Gastrocnemius medialis (tissue), 4 donors: ENCODE measurements at regions of chr21 and their contacts with region 1.

Region 1: DNA sequence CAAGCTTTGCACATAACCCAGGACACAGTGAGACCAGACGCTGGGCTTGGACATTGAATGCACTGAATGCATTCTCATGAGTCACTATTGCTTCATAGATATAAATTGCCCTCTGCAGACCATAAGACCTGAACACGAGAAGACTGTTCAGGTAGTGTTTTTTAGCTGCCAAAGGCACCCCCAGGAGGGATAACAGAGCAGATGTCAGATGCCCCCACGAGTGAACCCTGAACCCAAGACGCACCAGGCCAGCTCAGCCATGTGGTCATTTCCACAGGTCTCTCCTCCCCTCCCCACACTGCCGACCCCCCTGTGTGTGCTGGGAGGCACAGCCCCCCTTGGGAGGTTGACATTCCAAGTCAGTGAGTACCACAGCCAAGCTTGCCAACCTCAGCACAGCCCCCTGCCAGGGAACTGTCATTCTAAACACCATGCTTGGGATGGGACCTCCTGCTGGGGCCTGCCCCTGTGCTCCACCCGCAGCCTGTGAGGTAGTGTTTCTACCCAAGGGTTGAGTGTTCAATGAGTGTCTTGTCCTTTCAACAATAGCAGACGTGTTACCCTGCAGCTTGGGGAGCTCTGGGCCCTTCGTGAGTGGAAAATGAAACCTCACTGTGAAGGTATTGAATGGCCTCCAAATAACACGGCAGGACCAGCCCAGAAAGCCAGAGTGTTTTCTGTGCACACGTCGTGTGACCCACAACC is 68.2 kb downstream of the PSMG1 start:
- DNase-seq: peak in 1 of 2 donors; percentile 43
- ATAC-seq: peak; percentile 95 to 99
- H3K4me3 ChIP-seq: no peak overlapping the region
- H3K27ac ChIP-seq: peak overlapping the region; percentile 12 to 53 (median 50)
- H3K4me1 ChIP-seq: peaks cover 15% of the 10 kb centered on the region in 2 donors
- H3K27me3 ChIP-seq: no peaks in the 10 kb centered on the region
- CTCF ChIP-seq: no peak
- POLR2A ChIP-seq: no peak

Region 2: GRCh38 chr21:39016740-39017315 is 98.2 kb before region 1 on chr21:
- in situ Hi-C with region 1: loop called in 1 of 4 experiments (anchors 25 kb)
- intact Hi-C with region 1: no loop called
- DNase-seq: no peak
- ATAC-seq: no peak
- H3K4me3 ChIP-seq: no peak overlapping the region
- H3K27ac ChIP-seq: no peak overlapping the region
- H3K4me1 ChIP-seq: no peaks in the 10 kb centered on the region
- H3K27me3 ChIP-seq: no peaks in the 10 kb centered on the region
- CTCF ChIP-seq: no peak
- POLR2A ChIP-seq: no peak